Heart left ventricle (tissue), 16 donors: ENCODE measurements at regions of chr15 and their contacts with region 1.

Region 1: DNA sequence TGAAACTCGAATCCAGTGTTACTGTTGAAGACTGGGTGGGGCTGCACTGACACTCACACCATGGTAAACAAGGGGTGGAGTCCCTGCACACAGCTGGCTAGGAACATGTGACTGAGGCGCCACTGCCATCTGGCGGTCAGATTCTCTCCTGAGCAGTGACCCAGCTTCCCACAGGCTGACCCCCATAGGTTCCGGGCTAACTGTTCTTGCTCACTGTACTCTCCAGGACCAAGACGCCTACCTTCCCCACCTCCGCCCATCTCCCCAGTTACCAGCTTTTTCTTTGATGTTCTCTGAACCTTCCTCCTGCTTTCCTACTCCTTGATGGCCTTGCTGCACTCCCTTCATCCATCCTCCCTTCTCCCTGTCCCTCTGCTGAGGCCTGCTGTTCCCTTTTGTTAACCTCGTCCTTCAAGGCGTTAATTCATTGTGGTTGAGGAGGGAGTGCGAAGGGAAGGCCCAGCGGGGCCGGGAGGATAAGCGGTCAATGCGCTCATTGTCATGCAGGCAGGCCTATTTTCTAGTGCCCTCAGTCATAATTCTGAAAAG is 115.2 kb downstream of the ATP8B4 start:
- DNase-seq: peak; percentile 83 to 92 (median 86)
- ATAC-seq: peak; percentile 97 to 100 (median 100)
- H3K4me3 ChIP-seq: no peak overlapping the region
- H3K27ac ChIP-seq: peak overlapping the region in 6 of 12 donors; percentile 11 to 44 (median 21)
- H3K4me1 ChIP-seq: peaks cover 0 to 10% (median 4%) of the 10 kb centered on the region in 12 donors
- H3K27me3 ChIP-seq: no peaks in the 10 kb centered on the region
- CTCF ChIP-seq: peak; percentile 65 to 87 (median 78)
- POLR2A ChIP-seq: no peak

Region 2: GRCh38 chr15:49145651-49146609 is 857.9 kb before region 1 on chr15:
- intact Hi-C with region 1: loop called in 1 of 10 experiments (anchors 10 kb)
- DNase-seq: peak in 2 of 5 donors; percentile 20 to 26
- ATAC-seq: peak in 1 of 4 donors; percentile 51
- H3K4me3 ChIP-seq: no peak overlapping the region
- H3K27ac ChIP-seq: no peak overlapping the region
- H3K4me1 ChIP-seq: peaks cover 0 to 46% (median 28%) of the 10 kb centered on the region in 12 donors
- H3K27me3 ChIP-seq: no peaks in the 10 kb centered on the region
- CTCF ChIP-seq: peak; percentile 45 to 78 (median 66)
- POLR2A ChIP-seq: no peak

Region 3: GRCh38 chr15:49492824-49493223 is 511.0 kb before region 1 on chr15:
- intact Hi-C with region 1: loop called in 1 of 10 experiments (anchors 10 kb)
- DNase-seq: no peak
- ATAC-seq: no peak
- H3K4me3 ChIP-seq: no peak overlapping the region
- H3K27ac ChIP-seq: no peak overlapping the region
- H3K4me1 ChIP-seq: no peaks in the 10 kb centered on the region
- H3K27me3 ChIP-seq: no peaks in the 10 kb centered on the region
- CTCF ChIP-seq: no peak
- POLR2A ChIP-seq: no peak

Region 4: GRCh38 chr15:49876401-49877038 is 127.3 kb before region 1 on chr15:
- intact Hi-C with region 1: loop called in 4 of 10 experiments (anchors 1 to 10 kb)
- DNase-seq: peak in 1 of 5 donors; percentile 33
- ATAC-seq: peak; percentile 36 to 78 (median 58)
- H3K4me3 ChIP-seq: peak overlapping the region in 3 of 12 donors; percentile 13 to 20 (median 16)
- H3K27ac ChIP-seq: peak overlapping the region; percentile 17 to 88 (median 78)
- H3K4me1 ChIP-seq: peaks cover 0 to 34% (median 5%) of the 10 kb centered on the region in 12 donors
- H3K27me3 ChIP-seq: no peaks in the 10 kb centered on the region
- CTCF ChIP-seq: peak; percentile 17 to 54 (median 42)
- POLR2A ChIP-seq: no peak

Region 5: GRCh38 chr15:49901996-49902684 is 101.7 kb before region 1 on chr15:
- intact Hi-C with region 1: loop called in 1 of 10 experiments (anchors 5 kb)
- DNase-seq: no peak
- ATAC-seq: peak in 2 of 4 donors; percentile 26 to 42
- H3K4me3 ChIP-seq: peak overlapping the region in 2 of 12 donors; percentile 2 to 14
- H3K27ac ChIP-seq: peak overlapping the region; percentile 30 to 88 (median 71)
- H3K4me1 ChIP-seq: peaks cover 0 to 44% (median 15%) of the 10 kb centered on the region in 12 donors
- H3K27me3 ChIP-seq: no peaks in the 10 kb centered on the region
- CTCF ChIP-seq: peak in 7 of 12 donors; percentile 16 to 46 (median 38)
- POLR2A ChIP-seq: no peak